RWPE1 (cell line): ENCODE measurements at regions of chr17 and their contacts with region 1.

Region 1: DNA sequence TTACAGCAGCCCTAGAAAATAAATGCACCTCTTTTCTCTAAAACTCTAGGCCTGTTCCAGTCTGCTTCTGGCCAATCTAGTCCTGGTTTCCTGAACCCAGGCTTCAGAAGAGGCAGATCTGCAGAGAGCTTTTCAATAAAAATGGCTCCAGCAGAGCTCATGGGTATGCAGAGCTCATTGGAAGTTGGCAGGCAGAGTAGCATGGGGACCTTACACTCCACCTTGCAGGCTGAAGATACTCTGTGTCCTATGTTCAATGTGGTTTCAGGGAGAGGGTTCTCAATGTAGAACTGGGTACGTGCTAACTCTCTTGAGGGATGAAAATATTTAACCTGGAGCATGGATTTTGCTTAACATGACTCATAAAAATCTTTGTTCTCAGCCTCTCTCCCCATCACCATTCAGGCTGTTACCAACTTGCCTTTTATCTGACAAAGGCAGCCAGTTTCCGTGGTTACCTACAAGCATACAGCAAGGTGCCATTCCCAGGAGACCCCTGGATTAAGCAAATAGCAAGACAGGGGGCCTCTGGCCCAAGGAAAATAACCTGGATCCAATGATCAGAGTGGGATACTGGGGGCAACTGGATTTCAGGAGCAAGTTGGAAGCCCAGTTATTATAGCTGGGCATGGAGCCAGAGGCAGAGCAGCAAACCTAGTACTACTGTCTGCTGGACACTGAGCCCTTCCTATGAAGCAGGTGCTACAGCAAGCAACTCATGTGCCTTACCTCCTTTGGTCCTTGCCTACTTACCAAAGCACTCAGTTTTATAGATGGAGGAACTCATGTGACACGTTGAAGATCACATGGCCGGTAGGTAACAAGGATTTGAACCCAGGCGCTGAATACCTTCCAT is 98.2 kb upstream of the DHX40 start:
- DNase-seq: no peak
- H3K27ac ChIP-seq: no peak overlapping the region
- CTCF ChIP-seq: no peak

Region 2: GRCh38 chr17:59441456-59442096 is 25.6 kb before region 1 on chr17:
- CTCF ChIA-PET with region 1: no interaction called
- POLR2A ChIA-PET with region 1: no interaction called
- DNase-seq: no peak
- H3K27ac ChIP-seq: no peak overlapping the region
- CTCF ChIP-seq: no peak

Region 3: DNA sequence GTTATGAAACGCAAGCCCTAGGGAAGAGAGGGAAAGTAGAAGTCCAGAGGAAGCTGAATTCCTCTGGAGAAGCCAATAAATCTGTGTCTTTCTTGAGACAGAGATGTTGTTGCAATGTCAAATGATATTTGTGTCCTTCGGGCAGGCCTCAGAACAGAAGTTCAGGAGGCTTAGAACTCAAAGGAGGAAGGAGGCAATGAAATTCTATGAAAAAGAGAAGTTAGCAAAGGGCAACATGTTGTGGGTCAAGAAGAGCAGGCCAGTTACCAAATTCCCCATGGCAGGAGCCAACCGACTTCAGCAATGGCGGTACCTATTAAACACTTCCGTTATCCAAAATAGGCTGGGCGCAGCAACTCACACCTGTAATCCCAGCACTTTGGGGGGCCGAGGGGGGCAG is 10.7 kb before region 1 on chr17:
- CTCF ChIA-PET with region 1: no interaction called
- POLR2A ChIA-PET with region 1: interaction called, 13 read pairs
- DNase-seq: no peak
- H3K27ac ChIP-seq: no peak overlapping the region
- CTCF ChIP-seq: no peak